WTC11 (cell line): ENCODE measurements at regions of chr6 and their contacts with region 1.

Region 1: DNA sequence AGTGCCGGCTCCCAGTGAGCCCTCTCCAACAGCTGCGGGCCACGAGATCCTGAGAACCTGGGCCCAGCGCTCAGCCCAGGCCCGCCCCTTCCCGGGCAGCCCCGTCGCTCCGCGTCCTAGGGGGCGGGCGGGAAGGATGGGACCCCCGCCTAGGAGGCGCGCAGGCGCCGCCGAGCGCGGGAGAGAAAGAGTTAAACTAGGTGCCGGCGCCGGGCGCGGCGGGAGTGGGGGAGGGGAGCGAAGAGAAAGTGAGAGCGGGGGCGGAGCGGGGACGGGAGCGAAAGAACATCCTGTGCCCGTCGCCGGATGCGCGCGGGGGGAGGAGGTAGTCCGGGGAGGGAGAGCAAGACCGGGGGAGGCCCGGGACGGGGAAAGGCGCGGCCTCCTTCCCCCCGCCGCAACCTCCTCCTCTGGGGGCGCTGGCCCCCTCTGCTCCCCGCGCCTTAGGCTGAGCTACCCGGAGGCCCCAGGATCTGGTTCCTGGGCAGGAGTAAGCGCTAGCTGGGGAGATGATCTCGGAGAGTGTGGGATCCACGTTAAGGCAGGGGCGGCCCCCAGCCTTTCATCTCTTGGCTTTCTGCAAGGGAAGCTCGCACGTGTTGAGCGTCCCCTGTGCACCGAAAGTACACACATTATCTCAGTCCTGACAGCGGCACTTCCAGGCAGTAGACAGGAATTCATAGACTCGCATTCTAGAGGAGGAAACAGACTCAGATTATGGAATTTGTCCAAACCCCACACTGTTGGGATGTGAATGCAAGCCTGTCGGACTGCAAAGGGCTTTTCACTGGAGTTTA is 4.9 kb upstream of the ARMC12 start:
- DNase-seq: peak; percentile 94
- ATAC-seq: peak; percentile 46
- H3K4me3 Mint-ChIP-seq: peak overlapping the region; percentile 81
- H3K27ac Mint-ChIP-seq: peak overlapping the region; percentile 93
- H3K4me1 Mint-ChIP-seq: peaks cover 57% of the 10 kb centered on the region
- H3K27me3 Mint-ChIP-seq: peaks cover 11% of the 10 kb centered on the region
- CTCF ChIP-seq: no peak

Region 2: DNA sequence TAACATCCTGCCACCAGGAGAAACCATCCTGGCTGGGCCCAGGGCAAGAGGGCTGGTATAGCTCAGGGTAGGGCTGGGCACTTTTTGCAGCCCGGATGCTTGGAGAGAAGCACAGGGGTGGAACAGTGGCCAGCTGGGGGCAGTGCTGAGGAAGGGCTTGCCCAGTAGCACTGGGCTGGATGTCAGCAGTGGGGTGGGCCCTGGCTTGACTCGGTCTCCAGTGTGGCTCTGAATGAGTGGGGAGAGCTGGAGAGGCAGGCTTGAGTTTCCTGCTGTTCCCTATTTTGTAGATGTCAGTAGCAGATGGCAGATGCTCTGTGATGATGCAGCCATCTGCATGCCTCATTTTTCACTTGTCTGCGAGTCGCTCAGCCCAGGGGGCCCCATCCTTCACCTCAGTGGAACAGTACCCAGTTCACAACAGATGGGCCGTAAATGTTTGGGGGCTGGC is 162.9 kb before region 1 on chr6:
- CTCF ChIA-PET with region 1: interaction called, 14 read pairs
- POLR2A ChIA-PET with region 1: no interaction called
- DNase-seq: peak; percentile 66
- ATAC-seq: peak; percentile 95
- H3K4me3 Mint-ChIP-seq: no peak overlapping the region
- H3K27ac Mint-ChIP-seq: no peak overlapping the region
- H3K4me1 Mint-ChIP-seq: peaks cover 15% of the 10 kb centered on the region
- H3K27me3 Mint-ChIP-seq: no peaks in the 10 kb centered on the region
- CTCF ChIP-seq: peak; percentile 45

Region 3: GRCh38 chr6:35601331-35602132 is 130.4 kb before region 1 on chr6:
- CTCF ChIA-PET with region 1: interaction called, 15 read pairs
- POLR2A ChIA-PET with region 1: no interaction called
- DNase-seq: no peak
- ATAC-seq: peak; percentile 78
- H3K4me3 Mint-ChIP-seq: no peak overlapping the region
- H3K27ac Mint-ChIP-seq: peak overlapping the region; percentile 78
- H3K4me1 Mint-ChIP-seq: peaks cover 28% of the 10 kb centered on the region
- H3K27me3 Mint-ChIP-seq: no peaks in the 10 kb centered on the region
- CTCF ChIP-seq: no peak

Region 4: GRCh38 chr6:35663447-35664235 is 68.3 kb before region 1 on chr6:
- CTCF ChIA-PET with region 1: interaction called, 11 read pairs
- POLR2A ChIA-PET with region 1: interaction called, 3 read pairs
- DNase-seq: no peak
- ATAC-seq: peak; percentile 55
- H3K4me3 Mint-ChIP-seq: no peak overlapping the region
- H3K27ac Mint-ChIP-seq: no peak overlapping the region
- H3K4me1 Mint-ChIP-seq: no peaks in the 10 kb centered on the region
- H3K27me3 Mint-ChIP-seq: no peaks in the 10 kb centered on the region
- CTCF ChIP-seq: no peak

Region 5: DNA sequence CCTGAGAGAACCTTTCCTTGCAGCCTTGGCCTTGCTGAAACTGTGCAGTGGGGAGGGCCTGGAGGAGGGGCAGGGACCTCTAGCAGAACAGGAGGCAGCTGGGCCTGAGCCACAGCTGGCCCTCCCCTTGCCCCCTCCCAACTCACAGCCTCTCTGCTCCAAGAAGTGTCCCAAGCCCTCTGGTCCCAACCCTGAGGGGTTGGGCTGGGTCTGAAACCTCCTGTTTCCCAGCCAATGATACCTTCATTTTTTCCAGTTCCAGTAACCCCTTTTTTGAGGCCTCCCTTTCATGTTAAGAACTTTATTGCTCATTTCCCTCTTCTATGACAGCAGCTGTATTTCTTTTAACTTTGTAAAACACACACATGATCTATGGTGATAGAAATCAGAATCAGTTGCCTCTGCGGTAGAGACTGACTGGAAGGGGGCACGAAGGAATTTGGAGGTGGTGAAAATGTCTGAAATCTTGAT is 13.0 kb before region 1 on chr6:
- CTCF ChIA-PET with region 1: interaction called, 13 read pairs
- POLR2A ChIA-PET with region 1: interaction called, 8 read pairs
- DNase-seq: no peak
- ATAC-seq: peak; percentile 19; the same call in 1 of the 2 replicates
- H3K4me3 Mint-ChIP-seq: no peak overlapping the region
- H3K27ac Mint-ChIP-seq: peak overlapping the region; percentile 64
- H3K4me1 Mint-ChIP-seq: peaks cover 49% of the 10 kb centered on the region
- H3K27me3 Mint-ChIP-seq: no peaks in the 10 kb centered on the region; the same call in none of the 2 replicates
- CTCF ChIP-seq: no peak

Region 6: GRCh38 chr6:35893246-35893645 is 161.3 kb after region 1 on chr6:
- CTCF ChIA-PET with region 1: no interaction called
- POLR2A ChIA-PET with region 1: no interaction called
- DNase-seq: no peak
- ATAC-seq: no peak
- H3K4me3 Mint-ChIP-seq: no peak overlapping the region
- H3K27ac Mint-ChIP-seq: peak overlapping the region; percentile 58
- H3K4me1 Mint-ChIP-seq: peaks cover 26% of the 10 kb centered on the region
- H3K27me3 Mint-ChIP-seq: no peaks in the 10 kb centered on the region
- CTCF ChIP-seq: no peak